ENCODE measurements at regions of chr1 and their contacts with region 1.

Region 1: GRCh38 chr1:96966536-96967138 is 245.1 kb downstream of the PTBP2 start:
- DNase-seq: peak; percentile 38 to 92 (median 81)
- H3K4me3 ChIP-seq: peak overlapping the region in 42 of 59 donors; percentile 10 to 63 (median 36)
- H3K27ac ChIP-seq: no peak overlapping the region
- H3K27me3 ChIP-seq: no peaks in the 10 kb centered on the region
- CTCF ChIP-seq: peak; percentile 61 to 98 (median 93)

Region 2: GRCh38 chr1:97047421-97047793 is 80.8 kb after region 1 on chr1:
- intact Hi-C with region 1: loop called in 1 of 2 experiments (anchors 5 kb)
- DNase-seq: no peak
- H3K4me3 ChIP-seq: no peak overlapping the region
- H3K27ac ChIP-seq: no peak overlapping the region
- H3K27me3 ChIP-seq: peaks cover 0 to 3% (median 0%) of the 10 kb centered on the region in 45 donors
- CTCF ChIP-seq: no peak

Region 3: GRCh38 chr1:98048244-98048643 is 1081.6 kb after region 1 on chr1:
- intact Hi-C with region 1: loop called (anchors 2 to 5 kb)
- DNase-seq: peak in 9 of 10 donors; percentile 67 to 85 (median 76)
- H3K4me3 ChIP-seq: peak overlapping the region; percentile 30 to 81 (median 60)
- H3K27ac ChIP-seq: peak overlapping the region in 53 of 59 donors; percentile 9 to 90 (median 78)
- H3K27me3 ChIP-seq: peaks cover 0 to 44% (median 7%) of the 10 kb centered on the region in 45 donors
- CTCF ChIP-seq: peak in 42 of 56 donors; percentile 8 to 55 (median 26)

Measured in dorsolateral prefrontal cortex (tissue), 120 donors.